ENCODE measurements at regions of chr17 and their contacts with region 1.

Region 1: DNA sequence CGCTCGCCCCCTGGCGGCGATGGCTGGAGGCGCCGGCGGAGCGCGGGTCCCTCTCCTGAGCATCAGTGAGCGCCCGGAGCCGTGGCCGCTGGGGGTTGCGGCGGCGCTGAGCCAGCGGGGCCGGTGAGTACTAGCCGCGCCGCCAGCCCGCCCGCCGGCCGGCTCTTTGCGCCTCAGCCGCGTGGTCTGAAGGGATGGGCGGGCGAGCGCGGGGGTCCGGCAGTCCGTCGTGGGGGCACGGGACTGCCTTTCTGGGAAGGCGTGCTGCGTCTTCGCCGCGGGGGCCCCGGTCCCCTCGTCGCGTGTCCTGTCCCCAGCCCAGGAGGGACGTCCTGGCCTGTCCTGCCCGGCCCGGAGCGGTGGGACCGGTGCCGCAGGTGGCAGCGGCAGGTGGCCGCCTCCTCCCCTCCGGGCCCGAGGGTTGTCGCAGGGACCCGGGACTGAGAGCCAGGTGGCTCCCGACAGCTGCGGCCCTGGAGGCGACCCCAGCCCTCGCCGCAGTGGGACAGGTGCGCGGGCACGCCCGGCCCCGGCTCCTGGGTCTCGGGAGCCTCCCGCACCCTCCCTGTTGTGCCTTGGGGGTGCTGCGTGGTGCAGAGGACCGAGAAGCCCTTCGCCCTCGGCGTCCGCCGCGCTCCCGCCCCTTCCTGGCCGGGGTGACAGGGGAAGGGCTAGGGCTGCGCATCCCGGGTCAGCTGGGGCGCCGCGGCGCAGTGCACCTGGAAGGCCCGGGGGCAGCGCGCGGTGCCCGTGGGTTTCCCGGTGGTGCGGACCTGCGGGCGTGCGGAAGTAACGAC is at the start of gene SPECC1:
- DNase-seq: peak; percentile 30 to 94 (median 86)

Region 2: GRCh38 chr17:20091174-20092029 is 81.9 kb after region 1 on chr17:
- intact Hi-C with region 1: loop called (anchors 5 kb)
- DNase-seq: no peak